PC-9 (cell line): ENCODE measurements at regions of chr10 and their contacts with region 1.

Region 1: DNA sequence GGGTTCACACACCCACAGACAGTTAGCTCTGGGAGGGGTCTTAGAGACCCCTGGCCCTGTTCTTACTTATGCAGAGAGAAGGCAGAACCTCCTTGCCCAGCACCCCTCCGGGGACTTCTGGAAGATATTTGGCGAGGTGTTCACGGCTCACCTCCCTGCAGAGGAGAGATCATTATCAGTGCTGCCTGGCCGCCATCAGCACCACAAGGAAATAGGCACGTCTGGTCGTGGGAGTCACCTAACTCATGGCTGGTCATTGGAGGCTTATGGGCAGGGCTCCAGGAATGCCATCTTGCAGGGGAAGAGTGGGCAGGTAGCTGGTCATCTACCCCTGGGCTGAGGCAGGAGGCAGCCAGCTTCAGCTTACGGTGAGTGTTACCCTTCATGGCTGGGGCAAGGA is 189.4 kb downstream of the RPS24 start:
- DNase-seq: no peak
- H3K4me3 ChIP-seq: no peak overlapping the region
- H3K27ac ChIP-seq: no peak overlapping the region
- H3K4me1 ChIP-seq: no peaks in the 10 kb centered on the region
- H3K27me3 ChIP-seq: peaks cover 12% of the 10 kb centered on the region; the same call in 1 of the 2 replicates
- CTCF ChIP-seq: no peak

Region 2: DNA sequence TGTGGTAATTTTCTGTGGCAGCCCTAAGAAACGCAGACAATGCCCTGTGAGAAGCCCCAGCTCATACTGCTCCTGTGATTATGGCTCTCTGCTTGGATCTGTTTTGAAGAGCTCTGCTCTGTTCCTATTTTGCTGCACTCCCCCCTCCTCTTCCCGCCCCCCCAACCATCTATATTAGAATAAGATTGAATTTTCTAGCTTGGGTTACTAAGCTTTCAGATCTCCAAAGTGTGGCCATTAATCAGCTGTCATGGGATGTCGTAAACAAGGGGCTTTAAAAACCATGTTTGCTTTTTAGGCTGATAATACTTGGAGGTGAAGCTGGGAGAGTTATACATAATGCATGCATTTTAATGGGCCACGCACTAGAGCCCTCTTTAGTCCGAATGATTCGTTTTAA is 24.1 kb before region 1 on chr10:
- CTCF ChIA-PET with region 1: interaction called, 10 read pairs
- POLR2A ChIA-PET with region 1: no interaction called
- intact Hi-C with region 1: no loop called
- DNase-seq: no peak
- H3K4me3 ChIP-seq: no peak overlapping the region
- H3K27ac ChIP-seq: no peak overlapping the region
- H3K4me1 ChIP-seq: no peaks in the 10 kb centered on the region
- H3K27me3 ChIP-seq: peaks cover 30% of the 10 kb centered on the region; the same call in 1 of the 2 replicates
- CTCF ChIP-seq: no peak

Region 3: GRCh38 chr10:78424719-78425118 is 201.6 kb after region 1 on chr10:
- CTCF ChIA-PET with region 1: no interaction called
- POLR2A ChIA-PET with region 1: no interaction called
- intact Hi-C with region 1: no loop called
- DNase-seq: no peak
- H3K4me3 ChIP-seq: no peak overlapping the region
- H3K27ac ChIP-seq: no peak overlapping the region
- H3K4me1 ChIP-seq: no peaks in the 10 kb centered on the region
- H3K27me3 ChIP-seq: no peaks in the 10 kb centered on the region
- CTCF ChIP-seq: peak; percentile 59